ENCODE measurements at regions of chr1 and their contacts with region 1.

Region 1: DNA sequence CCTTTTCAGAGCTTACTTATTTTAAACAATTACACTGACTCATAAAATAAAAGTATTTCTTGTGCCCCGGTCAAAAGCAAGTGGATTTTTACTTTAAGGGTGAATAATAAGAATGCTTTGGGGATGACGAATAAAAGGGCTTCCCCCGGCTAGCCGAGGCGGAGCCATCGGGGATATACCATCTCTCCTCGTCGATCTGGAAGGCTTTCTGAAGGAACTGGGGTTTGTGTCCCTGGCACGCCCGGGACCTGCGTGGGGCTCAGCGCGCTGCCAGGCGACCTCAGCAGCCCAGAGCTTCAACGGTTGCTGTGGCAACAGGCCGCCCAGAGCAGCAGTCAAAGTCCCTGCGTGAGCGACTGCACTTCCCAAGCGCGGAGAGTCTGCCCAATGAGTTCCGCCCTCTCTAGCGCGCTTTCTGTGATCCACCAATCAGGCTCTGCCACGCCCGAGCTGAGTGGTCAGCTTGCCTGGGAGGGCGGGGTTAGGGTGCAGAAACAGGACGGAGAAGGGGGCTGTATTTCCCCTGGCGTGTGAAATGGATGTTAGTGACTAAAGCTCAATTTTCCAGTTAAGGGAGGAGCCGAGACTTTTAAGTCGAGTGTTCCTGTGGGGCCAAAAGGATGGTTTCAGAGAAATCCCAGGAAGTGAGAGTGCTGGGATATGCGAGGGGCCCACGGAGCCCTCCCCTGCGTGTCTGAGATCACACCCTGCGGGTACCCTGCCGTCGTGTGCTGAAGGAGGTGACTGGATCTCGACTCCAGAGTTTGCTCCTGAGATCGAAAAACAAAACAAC is 33.0 kb upstream of the MGST3 start:
- DNase-seq: peak; percentile 96
- H3K4me3 ChIP-seq: peak overlapping the region; percentile 36 to 70 (median 50)
- H3K27ac ChIP-seq: peak overlapping the region; percentile 11 to 87 (median 51)
- H3K4me1 ChIP-seq: peaks cover 0 to 33% (median 20%) of the 10 kb centered on the region in 6 donors
- H3K27me3 ChIP-seq: peaks cover 0 to 43% (median 18%) of the 10 kb centered on the region in 7 donors
- CTCF ChIP-seq: peak in 1 of 11 experiments; percentile 27
- POLR2A ChIP-seq: no peak

Region 2: GRCh38 chr1:165144757-165145397 is 453.2 kb before region 1 on chr1:
- intact Hi-C with region 1: loop called (anchors 10 kb)
- DNase-seq: no peak
- H3K4me3 ChIP-seq: no peak overlapping the region
- H3K27ac ChIP-seq: no peak overlapping the region
- H3K4me1 ChIP-seq: no peaks in the 10 kb centered on the region
- H3K27me3 ChIP-seq: peaks cover 0 to 27% (median 0%) of the 10 kb centered on the region in 7 donors
- CTCF ChIP-seq: peak in 8 of 11 experiments; percentile 33 to 76 (median 60)
- POLR2A ChIP-seq: no peak

Region 3: DNA sequence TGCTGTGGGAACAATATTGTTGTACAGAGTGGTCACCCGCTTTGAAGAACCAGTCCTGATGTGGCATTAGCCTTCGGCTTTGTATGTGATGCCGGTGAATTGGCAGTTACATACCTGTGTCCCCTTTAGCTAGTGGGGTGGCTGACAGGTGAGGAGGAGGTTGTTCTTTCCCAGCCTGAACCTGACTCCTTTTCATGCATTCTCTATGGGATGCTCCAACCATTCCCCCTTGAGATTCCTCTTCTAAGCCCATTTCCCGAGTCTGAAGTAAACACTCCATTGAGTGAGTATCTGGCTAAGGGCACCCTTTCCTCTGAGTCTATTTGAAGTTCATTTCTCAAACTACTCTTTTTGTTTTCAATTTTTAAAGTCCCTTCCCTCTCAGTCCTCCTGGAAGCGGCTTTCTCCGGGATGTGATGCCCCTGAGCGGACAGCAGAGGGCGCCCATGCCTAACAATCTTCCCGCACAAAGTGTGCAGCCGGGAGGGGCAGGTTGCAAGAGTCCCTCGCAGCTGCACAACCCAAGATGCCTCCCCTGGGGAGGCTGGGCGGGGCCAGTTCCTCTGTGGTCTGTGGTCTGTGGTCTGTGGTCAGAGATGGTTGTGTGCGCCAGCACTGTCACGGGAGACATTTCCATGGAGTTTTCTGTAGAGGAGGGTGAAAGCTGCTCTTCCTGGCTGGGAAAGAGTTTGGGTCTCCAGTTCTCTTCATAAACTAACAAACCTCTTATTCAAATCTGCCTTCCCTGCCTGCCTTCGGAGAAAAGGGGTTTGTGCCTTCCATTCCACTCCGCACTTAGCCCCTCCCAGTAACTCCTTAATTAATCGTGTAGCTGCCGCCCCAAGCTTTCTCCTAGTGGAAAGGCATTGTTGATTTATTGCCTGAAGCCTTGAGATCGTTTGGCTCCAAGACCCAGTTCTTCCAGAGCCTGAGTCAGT is 205.2 kb before region 1 on chr1:
- intact Hi-C with region 1: loop called (anchors 5 kb)
- DNase-seq: peak; percentile 95
- H3K4me3 ChIP-seq: peak overlapping the region in 1 of 8 donors; percentile 33
- H3K27ac ChIP-seq: no peak overlapping the region
- H3K4me1 ChIP-seq: peaks cover 5 to 18% (median 12%) of the 10 kb centered on the region in 6 donors
- H3K27me3 ChIP-seq: peaks cover 0 to 100% (median 29%) of the 10 kb centered on the region in 7 donors
- CTCF ChIP-seq: peak; percentile 83 to 96 (median 92)
- POLR2A ChIP-seq: no peak

Region 4: DNA sequence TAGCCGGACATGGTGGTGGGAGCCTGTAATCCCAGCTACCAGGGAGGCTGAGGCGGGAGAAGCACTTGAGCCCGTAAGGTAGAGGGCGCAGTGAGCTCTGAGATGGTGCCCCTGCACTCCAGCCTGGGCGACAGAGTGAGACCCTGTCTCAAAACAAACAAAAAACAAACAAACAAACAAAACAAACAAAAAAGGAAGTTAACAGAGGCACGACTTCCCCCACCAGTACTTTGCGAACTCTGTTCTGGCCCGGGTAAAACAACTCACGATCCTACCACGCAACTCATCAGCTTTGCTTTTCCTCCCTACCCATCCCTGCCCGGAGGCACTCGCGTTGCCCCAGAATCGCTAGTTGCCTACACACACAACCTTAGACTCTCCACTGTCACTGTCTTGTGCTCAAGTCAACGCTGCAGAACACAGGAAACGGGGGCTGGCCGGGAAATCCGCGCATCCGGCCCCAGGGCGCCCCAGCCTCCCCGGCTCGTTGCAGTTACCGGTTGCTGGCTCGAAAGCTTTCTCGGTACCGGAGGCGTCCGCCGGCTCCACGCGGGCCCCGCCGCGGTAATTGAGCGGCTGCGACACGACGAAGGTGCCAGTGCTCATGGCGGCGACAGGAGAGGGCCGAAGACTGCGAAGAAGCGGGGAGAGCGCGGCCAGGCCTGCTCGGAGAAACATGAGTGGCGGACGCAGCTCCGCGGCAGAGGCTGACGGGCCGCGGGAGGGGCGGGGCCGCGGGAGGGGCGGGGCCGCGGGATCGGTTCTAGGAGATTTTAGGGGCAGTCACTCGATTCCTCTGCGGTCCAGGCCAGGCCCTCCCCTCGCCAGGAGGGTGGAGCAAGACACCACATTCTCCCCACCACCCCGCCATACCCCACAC is 100.0 kb after region 1 on chr1 and contains the start of gene ALDH9A1:
- intact Hi-C with region 1: loop called (anchors 10 kb)
- DNase-seq: peak; percentile 97
- H3K4me3 ChIP-seq: peak within 1 kb of the TSS; percentile 62 to 91 (median 72)
- H3K27ac ChIP-seq: peak within 1 kb of the TSS; percentile 93 to 99 (median 97)
- H3K4me1 ChIP-seq: peaks cover 17 to 49% (median 34%) of the 10 kb centered on the region in 6 donors
- H3K27me3 ChIP-seq: no peaks in the 10 kb centered on the region
- CTCF ChIP-seq: peak in 7 of 11 experiments; percentile 9 to 44 (median 24)
- POLR2A ChIP-seq: peak in 2 of 3 donors; percentile 50 to 75
- total RNA-seq, gene ALDH9A1: 51.3 to 103 (median 69.3) TPM

Region 5: DNA sequence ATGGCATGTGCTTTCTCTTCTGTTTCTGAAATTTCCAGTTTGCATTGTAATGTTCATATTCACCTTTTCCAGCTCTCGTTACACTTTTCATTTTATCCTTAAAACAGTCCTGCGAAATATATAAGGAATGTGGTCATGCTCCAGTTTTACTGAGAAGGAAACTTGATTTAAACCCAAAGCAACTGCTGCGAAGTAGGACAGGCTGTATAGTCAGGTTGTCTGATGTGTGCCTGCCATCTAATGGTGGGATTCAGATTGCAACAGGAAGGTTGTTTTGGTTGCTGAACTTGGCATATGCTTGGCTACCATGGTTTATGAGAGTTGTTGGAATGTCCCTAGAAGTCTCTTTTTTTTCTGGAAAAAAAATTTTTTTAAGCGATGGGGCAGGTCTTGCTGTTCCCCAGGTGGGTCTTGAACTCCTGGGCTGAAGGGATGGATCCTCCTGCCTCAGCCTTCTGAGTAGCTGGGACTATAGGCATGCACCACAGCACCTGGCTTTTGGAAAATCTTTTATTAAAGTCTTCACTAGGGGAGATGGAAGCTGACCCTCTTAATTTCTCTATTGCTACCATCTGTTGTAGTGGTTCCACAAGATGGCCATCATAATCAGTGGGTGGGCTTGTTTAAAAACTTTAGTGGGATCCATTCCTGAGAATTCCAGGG is 316.2 kb after region 1 on chr1:
- intact Hi-C with region 1: loop called (anchors 2 kb)
- DNase-seq: no peak
- H3K4me3 ChIP-seq: no peak overlapping the region
- H3K27ac ChIP-seq: no peak overlapping the region
- H3K4me1 ChIP-seq: peaks cover 0 to 21% (median 15%) of the 10 kb centered on the region in 6 donors
- H3K27me3 ChIP-seq: no peaks in the 10 kb centered on the region
- CTCF ChIP-seq: peak; percentile 74 to 93 (median 85)
- POLR2A ChIP-seq: no peak

Measured in spleen (tissue), 13 donors.